ENCODE measurements at regions of chr4 and their contacts with region 1.

Region 1: DNA sequence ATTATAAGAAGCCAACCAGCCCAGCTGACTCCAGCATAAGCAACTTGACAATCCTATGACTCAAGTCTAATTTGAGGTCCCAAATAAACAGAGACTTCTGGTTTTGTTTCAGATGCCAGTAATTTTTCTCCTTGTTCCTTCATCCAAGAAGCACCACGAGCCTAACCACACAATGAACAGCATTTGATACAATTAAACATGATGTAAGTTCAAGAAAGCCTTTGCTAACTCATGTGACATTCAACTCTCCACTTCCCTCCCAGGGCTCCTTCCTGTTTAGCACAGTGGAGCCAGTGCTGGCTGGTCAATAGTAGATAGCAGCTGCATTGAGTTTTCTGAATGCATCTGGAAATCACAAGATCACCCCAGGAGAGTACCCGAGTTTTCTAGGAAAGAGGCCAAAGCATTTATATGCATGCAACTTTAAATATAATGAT is 206.3 kb downstream of the ARHGAP24 start:
- DNase-seq: no peak
- ATAC-seq: peak; percentile 65
- H3K4me3 Mint-ChIP-seq: no peak overlapping the region
- H3K27ac Mint-ChIP-seq: peak overlapping the region; percentile 74
- H3K4me1 Mint-ChIP-seq: peaks cover 57% of the 10 kb centered on the region
- H3K27me3 Mint-ChIP-seq: no peaks in the 10 kb centered on the region
- CTCF ChIP-seq: no peak

Region 2: DNA sequence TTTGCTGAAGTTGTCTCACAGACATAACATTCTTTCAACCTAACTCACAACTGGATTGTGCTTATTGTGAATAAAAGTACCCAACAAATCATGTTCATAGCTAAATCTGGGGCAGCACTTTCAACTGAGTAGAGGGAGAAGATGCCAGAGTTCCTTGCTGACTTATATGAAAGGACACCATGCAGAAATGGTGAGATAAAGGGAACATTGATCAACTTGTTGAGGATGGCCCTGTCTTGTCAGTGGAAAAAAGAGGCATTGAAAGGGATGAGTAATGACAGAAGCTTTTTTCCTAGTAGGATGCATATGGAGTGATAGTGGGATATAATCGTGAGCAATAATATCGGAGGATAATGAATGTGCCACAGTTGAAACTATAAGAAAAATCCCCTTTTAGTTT is 15.4 kb after region 1 on chr4:
- CTCF ChIA-PET with region 1: no interaction called
- POLR2A ChIA-PET with region 1: interaction called, 3 read pairs
- intact Hi-C with region 1: loop called (anchors 1 kb)
- DNase-seq: no peak
- ATAC-seq: no peak
- H3K4me3 Mint-ChIP-seq: no peak overlapping the region
- H3K27ac Mint-ChIP-seq: peak overlapping the region; percentile 50
- H3K4me1 Mint-ChIP-seq: peaks cover 62% of the 10 kb centered on the region
- H3K27me3 Mint-ChIP-seq: no peaks in the 10 kb centered on the region
- CTCF ChIP-seq: no peak

Measured in activated B cell treated with CpG ODN at 0.5 μM for 24 hours (primary cell).